ENCODE measurements at regions of chr3 and their contacts with region 1.

Region 1: GRCh38 chr3:46866720-46867549 is 3.7 kb upstream of the MYL3 start:
- DNase-seq: peak; percentile 81
- ATAC-seq: peak; percentile 72
- H3K4me3 Mint-ChIP-seq: no peak overlapping the region
- H3K27ac Mint-ChIP-seq: no peak overlapping the region
- H3K4me1 Mint-ChIP-seq: no peaks in the 10 kb centered on the region
- H3K27me3 Mint-ChIP-seq: peaks cover 7% of the 10 kb centered on the region

Region 2: DNA sequence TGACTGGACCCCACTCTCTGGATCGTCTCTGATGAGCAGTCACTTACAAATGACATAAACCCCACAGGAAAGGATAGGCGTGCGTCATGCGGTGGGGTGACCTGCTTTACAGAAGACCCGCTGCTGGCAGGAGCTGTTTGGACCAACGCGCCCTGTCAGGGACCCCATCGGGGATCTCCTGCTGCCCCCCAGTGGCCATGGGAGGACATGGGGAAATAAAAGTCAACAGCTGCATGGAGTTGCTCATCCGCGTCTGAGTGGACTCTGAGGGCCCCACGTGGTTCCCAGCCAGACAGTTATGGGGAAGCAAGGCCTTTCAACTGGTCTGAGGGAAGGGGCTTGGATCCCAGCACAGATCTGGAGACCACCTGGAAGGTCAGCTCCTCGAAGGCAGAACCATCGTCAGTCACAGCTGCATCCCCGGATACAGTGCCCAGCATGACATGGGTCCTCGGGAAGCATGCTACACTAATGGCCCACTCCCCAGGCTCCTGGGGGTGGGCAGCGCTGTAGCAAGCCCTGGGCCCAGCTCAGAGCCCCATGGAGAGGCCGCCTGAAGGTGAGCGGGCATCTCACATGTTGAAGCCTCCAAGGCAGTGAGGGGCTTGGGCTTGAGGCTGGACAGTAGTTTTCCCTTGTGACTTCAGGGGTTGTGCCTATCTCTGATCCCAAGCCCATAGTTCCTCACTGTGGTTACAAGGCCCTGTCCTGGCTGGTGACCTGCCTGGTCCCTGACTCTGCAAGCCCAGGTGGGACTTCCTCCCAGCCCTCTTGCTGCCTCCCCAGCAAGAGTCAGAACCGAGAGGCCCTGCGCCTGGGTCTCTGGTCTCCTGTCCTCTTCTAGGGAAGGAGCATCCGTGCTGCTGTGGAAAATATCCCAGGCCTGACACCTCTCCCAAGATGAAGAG is 42.9 kb after region 1 on chr3:
- CTCF ChIA-PET with region 1: interaction called, 20 read pairs
- DNase-seq: peak; percentile 89
- ATAC-seq: peak; percentile 84
- H3K4me3 Mint-ChIP-seq: no peak overlapping the region
- H3K27ac Mint-ChIP-seq: no peak overlapping the region
- H3K4me1 Mint-ChIP-seq: peaks cover 24% of the 10 kb centered on the region
- H3K27me3 Mint-ChIP-seq: no peaks in the 10 kb centered on the region